Stomach (tissue), 19 donors: ENCODE measurements at regions of chr12 and their contacts with region 1.

Region 1: GRCh38 chr12:66235626-66236281 is 46.7 kb downstream of the IRAK3 start:
- DNase-seq: peak in 1 of 2 donors; percentile 36
- H3K4me3 ChIP-seq: peak overlapping the region; percentile 43 to 53 (median 48)
- H3K27ac ChIP-seq: peak overlapping the region in 4 of 5 donors; percentile 42 to 79 (median 72)
- H3K4me1 ChIP-seq: peaks cover 0 to 18% (median 10%) of the 10 kb centered on the region in 4 donors
- H3K27me3 ChIP-seq: no peaks in the 10 kb centered on the region
- CTCF ChIP-seq: no peak
- EP300 ChIP-seq: no peak
- POLR2A ChIP-seq: no peak

Region 2: GRCh38 chr12:66144791-66145754 is 90.7 kb before region 1 on chr12:
- intact Hi-C with region 1: loop called (anchors 10 kb)
- DNase-seq: peak; percentile 65 to 84
- H3K4me3 ChIP-seq: no peak overlapping the region
- H3K27ac ChIP-seq: peak overlapping the region in 4 of 5 donors; percentile 5 to 85 (median 62)
- H3K4me1 ChIP-seq: peaks cover 8 to 46% (median 10%) of the 10 kb centered on the region in 4 donors
- H3K27me3 ChIP-seq: no peaks in the 10 kb centered on the region
- CTCF ChIP-seq: peak in 5 of 7 experiments; percentile 24 to 78 (median 57)
- EP300 ChIP-seq: no peak
- POLR2A ChIP-seq: no peak